Naive thymus-derived CD4-positive, alpha-beta T cell (primary cell): ENCODE measurements at regions of chr11 and their contacts with region 1.

Region 1: GRCh38 chr11:45917623-45918330 is at the start of gene PEX16:
- DNase-seq: peak; percentile 86 to 98 (median 97)
- ATAC-seq: peak; percentile 95
- H3K4me3 ChIP-seq: peak within 1 kb of the TSS; percentile 72
- H3K4me3 Mint-ChIP-seq: peak within 1 kb of the TSS; percentile 86 to 98 (median 96)
- H3K27ac ChIP-seq: peak within 1 kb of the TSS; percentile 87
- H3K27ac Mint-ChIP-seq: peak within 1 kb of the TSS; percentile 91 to 100 (median 98)
- H3K4me1 ChIP-seq: peaks cover 24 to 36% of the 10 kb centered on the region in 2 donors
- H3K4me1 Mint-ChIP-seq: peaks cover 31 to 66% (median 49%) of the 10 kb centered on the region in 7 donors
- H3K27me3 ChIP-seq: no peaks in the 10 kb centered on the region
- H3K27me3 Mint-ChIP-seq: peaks cover 0 to 13% (median 4%) of the 10 kb centered on the region in 5 donors
- total RNA-seq, gene PEX16: 48.2 to 64.3 (median 58.1) TPM

Region 2: GRCh38 chr11:45804761-45805304 is 112.9 kb before region 1 on chr11 and contains the start of gene SLC35C1:
- CTCF ChIA-PET with region 1: no interaction called
- POLR2A ChIA-PET with region 1: interaction called, 4 read pairs
- intact Hi-C with region 1: loop called (anchors 1 kb)
- DNase-seq: peak; percentile 89 to 97 (median 93)
- ATAC-seq: peak; percentile 99
- H3K4me3 ChIP-seq: peak within 1 kb of the TSS; percentile 95
- H3K4me3 Mint-ChIP-seq: peak within 1 kb of the TSS; percentile 86 to 99 (median 92)
- H3K27ac ChIP-seq: peak within 1 kb of the TSS; percentile 87
- H3K27ac Mint-ChIP-seq: peak within 1 kb of the TSS; percentile 61 to 94 (median 91)
- H3K4me1 ChIP-seq: peaks cover 27 to 29% of the 10 kb centered on the region in 2 donors
- H3K4me1 Mint-ChIP-seq: peaks cover 31 to 43% (median 40%) of the 10 kb centered on the region in 7 donors
- H3K27me3 ChIP-seq: no peaks in the 10 kb centered on the region
- H3K27me3 Mint-ChIP-seq: no peaks in the 10 kb centered on the region
- total RNA-seq, gene SLC35C1: 7.9 to 22.8 (median 14.2) TPM

Region 3: GRCh38 chr11:45899448-45900173 is 18.2 kb before region 1 on chr11:
- CTCF ChIA-PET with region 1: no interaction called
- POLR2A ChIA-PET with region 1: interaction called, 3 read pairs
- intact Hi-C with region 1: loop called in 1 of 2 experiments (anchors 1 kb)
- DNase-seq: peak in 6 of 9 donors; percentile 19 to 70 (median 42)
- ATAC-seq: peak; percentile 83
- H3K4me3 ChIP-seq: peak overlapping the region; percentile 37
- H3K4me3 Mint-ChIP-seq: peak overlapping the region; percentile 35 to 79 (median 64)
- H3K27ac ChIP-seq: peak overlapping the region; percentile 21
- H3K27ac Mint-ChIP-seq: no peak overlapping the region
- H3K4me1 ChIP-seq: peaks cover 7 to 9% of the 10 kb centered on the region in 2 donors
- H3K4me1 Mint-ChIP-seq: peaks cover 0 to 9% (median 4%) of the 10 kb centered on the region in 7 donors
- H3K27me3 ChIP-seq: peaks cover 0 to 5% of the 10 kb centered on the region in 2 donors
- H3K27me3 Mint-ChIP-seq: peaks cover 25 to 48% (median 35%) of the 10 kb centered on the region in 5 donors

Region 4: DNA sequence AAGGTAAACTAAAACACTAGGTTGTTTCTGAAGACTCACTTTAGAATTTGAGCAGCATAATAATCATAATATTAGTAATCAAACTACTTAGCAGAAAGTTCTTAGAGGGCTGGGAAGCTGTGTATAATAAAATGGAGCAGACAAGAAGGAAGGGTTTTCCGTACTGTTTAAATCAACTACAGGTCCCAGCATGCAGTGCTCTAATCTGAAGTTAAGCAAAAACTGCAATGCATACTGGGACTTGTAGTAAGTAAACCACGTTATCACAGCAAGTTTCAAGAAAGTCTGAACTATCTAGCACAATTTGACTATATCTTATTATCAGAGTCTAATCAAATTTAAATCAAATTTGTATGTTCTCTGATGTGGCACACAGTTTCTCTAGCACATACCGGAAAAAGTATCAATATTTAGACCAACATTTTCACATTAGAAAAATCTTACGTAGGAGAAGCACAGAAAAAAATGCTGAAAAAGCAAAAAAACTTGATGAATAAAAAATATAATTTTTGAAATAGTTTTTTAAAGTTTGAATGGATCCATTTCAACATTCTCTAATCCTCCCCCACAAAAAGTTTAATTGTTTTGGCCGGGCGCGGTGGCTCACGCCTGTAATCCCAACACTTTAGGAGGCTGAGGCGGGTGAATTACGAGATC is 195.3 kb after region 1 on chr11:
- CTCF ChIA-PET with region 1: no interaction called
- POLR2A ChIA-PET with region 1: no interaction called
- intact Hi-C with region 1: loop called in 1 of 2 experiments (anchors 1 kb)
- DNase-seq: peak in 7 of 9 donors; percentile 36 to 76 (median 55)
- ATAC-seq: peak; percentile 99
- H3K4me3 ChIP-seq: no peak overlapping the region
- H3K4me3 Mint-ChIP-seq: peak overlapping the region in 6 of 10 donors; percentile 27 to 57 (median 31)
- H3K27ac ChIP-seq: no peak overlapping the region
- H3K27ac Mint-ChIP-seq: peak overlapping the region in 4 of 9 donors; percentile 51 to 63 (median 56)
- H3K4me1 ChIP-seq: peaks cover 13 to 23% of the 10 kb centered on the region in 2 donors
- H3K4me1 Mint-ChIP-seq: peaks cover 24 to 57% (median 45%) of the 10 kb centered on the region in 7 donors
- H3K27me3 ChIP-seq: no peaks in the 10 kb centered on the region
- H3K27me3 Mint-ChIP-seq: no peaks in the 10 kb centered on the region

Region 5: GRCh38 chr11:46936138-46937110 is 1018.6 kb after region 1 on chr11 and contains the start of gene CSTPP1:
- CTCF ChIA-PET with region 1: no interaction called
- POLR2A ChIA-PET with region 1: no interaction called
- intact Hi-C with region 1: loop called in 1 of 2 experiments (anchors 5 kb)
- DNase-seq: peak; percentile 80 to 92 (median 89)
- ATAC-seq: peak; percentile 99
- H3K4me3 ChIP-seq: peak within 1 kb of the TSS; percentile 76
- H3K4me3 Mint-ChIP-seq: peak within 1 kb of the TSS; percentile 86 to 100 (median 92)
- H3K27ac ChIP-seq: peak within 1 kb of the TSS; percentile 72
- H3K27ac Mint-ChIP-seq: peak within 1 kb of the TSS; percentile 89 to 98 (median 92)
- H3K4me1 ChIP-seq: peaks cover 0 to 11% of the 10 kb centered on the region in 2 donors
- H3K4me1 Mint-ChIP-seq: peaks cover 5 to 24% (median 21%) of the 10 kb centered on the region in 7 donors
- H3K27me3 ChIP-seq: no peaks in the 10 kb centered on the region
- H3K27me3 Mint-ChIP-seq: peaks cover 8 to 19% (median 9%) of the 10 kb centered on the region in 5 donors
- total RNA-seq, gene CSTPP1: 9.3 to 18.6 (median 16.1) TPM